WTC11 (cell line): ENCODE measurements at regions of chr15 and their contacts with region 1.

Region 1: DNA sequence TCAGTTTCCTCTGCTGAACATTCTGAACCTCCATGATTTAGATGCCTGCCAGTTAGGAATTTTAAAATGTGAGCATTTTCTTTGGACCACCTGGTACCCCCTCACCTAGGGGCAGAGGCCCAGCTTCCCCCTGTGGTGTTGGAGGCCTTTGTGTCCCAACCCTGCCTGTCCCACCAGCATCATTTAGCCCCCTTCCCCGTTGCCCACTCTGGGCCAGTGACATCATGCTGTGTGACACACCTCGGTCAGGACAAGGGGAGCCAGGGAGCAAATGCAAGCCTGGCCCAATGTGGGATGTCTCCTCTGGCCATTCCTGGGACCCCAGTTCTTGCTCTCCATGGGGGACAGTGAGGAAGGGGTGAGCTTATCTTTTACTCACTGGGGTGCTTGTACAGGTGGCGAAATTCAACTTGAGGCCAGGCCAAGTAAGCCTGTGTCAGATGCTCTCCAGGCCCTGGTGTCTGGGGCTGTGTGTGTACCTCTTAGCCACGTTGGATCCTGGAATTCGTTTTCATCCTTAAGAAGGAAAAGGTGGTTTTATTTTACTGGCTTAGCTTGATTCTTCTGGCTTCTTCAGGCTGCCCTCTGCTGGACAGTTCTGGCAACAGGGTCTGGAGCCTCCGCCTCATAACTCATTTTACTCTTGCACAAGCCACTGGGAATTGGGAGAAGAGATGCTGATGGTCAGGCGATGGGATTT is 49.7 kb upstream of the MYZAP start:
- DNase-seq: peak; percentile 77
- ATAC-seq: peak; percentile 67
- H3K4me3 Mint-ChIP-seq: no peak overlapping the region
- H3K27ac Mint-ChIP-seq: peak overlapping the region; percentile 89
- H3K4me1 Mint-ChIP-seq: no peaks in the 10 kb centered on the region
- H3K27me3 Mint-ChIP-seq: no peaks in the 10 kb centered on the region
- CTCF ChIP-seq: peak; percentile 60

Region 2: DNA sequence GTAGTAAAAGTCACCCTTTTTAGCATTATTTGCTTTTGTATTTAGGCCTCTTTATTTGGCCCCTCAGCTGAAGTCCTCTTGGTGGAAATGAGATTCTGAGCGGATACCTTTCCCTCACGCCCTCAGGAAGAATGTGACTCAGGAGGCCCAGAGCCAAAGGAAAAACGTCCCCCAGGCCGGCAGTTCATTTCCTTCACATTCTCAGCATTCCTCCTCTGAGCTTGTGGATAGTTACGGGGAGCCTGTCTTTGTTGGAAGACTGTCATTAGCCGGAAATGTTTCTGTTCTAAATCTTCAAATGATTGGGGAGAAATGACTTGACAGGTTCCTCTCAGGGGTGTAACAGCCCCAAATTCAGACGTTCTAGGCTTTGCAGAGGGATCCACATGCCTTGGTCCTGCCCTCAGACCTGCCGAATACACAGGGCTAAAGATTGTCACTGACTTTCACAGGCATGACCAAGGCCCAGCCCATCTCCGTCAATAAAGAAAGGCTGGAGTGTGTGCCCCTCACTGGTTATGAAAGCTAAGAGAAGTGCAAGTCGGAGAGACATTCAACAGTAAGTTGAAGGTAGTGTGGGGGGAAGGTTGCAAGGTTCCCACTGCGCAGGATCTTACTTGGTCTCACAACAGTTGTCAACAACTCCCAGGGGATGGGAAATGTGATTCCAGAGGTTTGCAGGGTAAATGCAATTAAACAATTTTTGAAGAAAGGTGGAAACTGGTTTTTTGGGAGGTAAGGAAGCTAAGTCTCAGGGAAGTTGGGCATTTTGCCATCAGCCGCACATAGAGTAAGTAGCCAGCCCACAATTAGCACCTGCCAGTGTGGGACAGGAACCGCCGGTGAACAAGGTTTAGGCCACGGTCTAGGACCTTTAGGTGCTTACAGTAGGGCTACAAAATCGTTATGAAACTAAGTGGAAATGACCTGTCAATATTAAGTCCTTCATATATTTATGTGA is 10.0 kb after region 1 on chr15:
- CTCF ChIA-PET with region 1: interaction called, 43 read pairs
- POLR2A ChIA-PET with region 1: no interaction called
- DNase-seq: peak; percentile 56
- ATAC-seq: peak; percentile 84
- H3K4me3 Mint-ChIP-seq: no peak overlapping the region
- H3K27ac Mint-ChIP-seq: peak overlapping the region; percentile 96
- H3K4me1 Mint-ChIP-seq: peaks cover 33% of the 10 kb centered on the region
- H3K27me3 Mint-ChIP-seq: no peaks in the 10 kb centered on the region
- CTCF ChIP-seq: no peak